ENCODE measurements at regions of chr3 and their contacts with region 1.

Region 1: DNA sequence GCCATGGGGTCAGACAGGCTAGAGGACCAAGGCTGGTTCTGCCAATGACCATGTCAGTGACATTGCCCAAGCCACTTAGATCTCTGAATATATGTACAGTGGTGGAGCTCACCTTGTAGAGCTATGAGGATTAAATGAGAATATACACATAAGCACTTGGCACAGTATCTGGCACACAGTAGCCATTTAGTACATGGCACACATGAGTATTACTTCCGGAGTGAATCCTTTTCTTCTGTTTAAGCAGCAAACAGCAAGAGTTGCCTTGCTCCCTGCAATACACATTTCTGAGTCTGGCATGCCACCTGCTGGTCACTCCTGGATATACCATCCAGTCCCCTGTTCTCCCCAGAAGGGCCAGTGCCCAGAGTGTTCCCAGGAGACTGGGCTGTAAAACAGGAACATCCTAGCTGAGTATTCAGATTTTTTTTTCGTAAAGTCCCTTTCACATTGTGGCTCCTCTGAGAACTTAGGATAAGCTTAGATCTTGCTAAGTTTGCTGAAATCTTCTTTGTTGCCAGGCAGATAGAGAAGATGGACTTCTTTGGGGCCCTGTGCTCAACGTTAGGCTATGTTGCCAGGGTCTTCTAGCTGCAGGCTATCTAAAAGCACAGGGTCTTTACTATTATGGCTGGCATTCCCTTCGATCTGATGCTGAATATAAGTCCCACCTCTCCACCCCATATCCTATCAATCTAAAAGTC is 203.4 kb downstream of the ADAMTS9 start:
- DNase-seq: peak; percentile 52
- H3K4me3 Mint-ChIP-seq: no peak overlapping the region
- H3K27ac Mint-ChIP-seq: no peak overlapping the region
- H3K4me1 Mint-ChIP-seq: no peaks in the 10 kb centered on the region
- H3K27me3 Mint-ChIP-seq: peaks cover 13% of the 10 kb centered on the region

Region 2: GRCh38 chr3:63863148-63864007 is 621.1 kb before region 1 on chr3 and contains the starts of genes ATXN7 and THOC7:
- intact Hi-C with region 1: loop called (anchors 5 kb)
- DNase-seq: peak; percentile 72
- H3K4me3 Mint-ChIP-seq: peak within 1 kb of the TSS; percentile 91
- H3K27ac Mint-ChIP-seq: peak within 1 kb of the TSS; percentile 94
- H3K4me1 Mint-ChIP-seq: peaks cover 67% of the 10 kb centered on the region
- H3K27me3 Mint-ChIP-seq: no peaks in the 10 kb centered on the region
- total RNA-seq, gene ATXN7: 40.7 and 48.2 TPM in 2 replicates
- total RNA-seq, gene THOC7: 100 and 106 TPM in 2 replicates

Region 3: DNA sequence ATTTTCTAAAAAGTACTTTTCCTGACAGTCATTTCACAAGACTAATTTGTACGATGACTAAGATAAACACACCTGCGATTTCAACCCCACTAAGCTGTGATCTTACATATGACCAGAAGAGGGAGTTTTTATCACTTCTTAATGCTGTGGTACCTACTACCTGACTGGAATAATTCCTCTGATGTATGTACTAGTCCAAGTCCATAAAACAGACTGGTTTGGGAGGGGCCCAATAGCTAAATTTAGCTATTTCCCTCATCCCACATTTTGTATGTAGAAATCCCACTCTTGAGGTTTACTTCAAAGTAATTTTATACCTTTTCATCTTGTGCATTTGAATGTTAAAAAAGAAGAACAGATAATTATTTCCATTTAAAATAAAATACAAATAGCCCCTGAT is 522.5 kb before region 1 on chr3:
- intact Hi-C with region 1: loop called (anchors 5 kb)
- DNase-seq: no peak
- H3K4me3 Mint-ChIP-seq: no peak overlapping the region
- H3K27ac Mint-ChIP-seq: no peak overlapping the region
- H3K4me1 Mint-ChIP-seq: peaks cover 51% of the 10 kb centered on the region
- H3K27me3 Mint-ChIP-seq: no peaks in the 10 kb centered on the region

Region 4: DNA sequence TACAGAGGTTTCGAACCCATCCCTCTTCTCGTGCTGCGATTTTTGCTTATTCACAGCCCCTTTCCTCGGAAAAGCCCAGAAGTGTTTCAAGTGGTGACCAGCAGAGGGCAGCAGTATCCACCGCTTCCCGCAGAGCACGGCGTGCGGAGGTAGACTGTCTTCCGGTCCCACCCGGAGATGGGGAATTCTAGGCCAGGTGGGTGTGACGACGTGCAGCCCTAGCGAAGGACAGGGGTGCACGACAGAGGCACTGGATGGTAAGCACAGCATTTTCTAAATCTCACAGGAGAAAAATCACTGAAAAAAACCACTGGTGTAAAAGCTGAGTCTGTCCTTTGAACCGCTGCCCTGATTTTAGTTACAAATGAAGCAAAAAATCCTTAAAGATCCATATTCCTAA is 453.7 kb before region 1 on chr3:
- intact Hi-C with region 1: loop called (anchors 1 kb)
- DNase-seq: peak; percentile 63
- H3K4me3 Mint-ChIP-seq: peak overlapping the region; percentile 67
- H3K27ac Mint-ChIP-seq: peak overlapping the region; percentile 49
- H3K4me1 Mint-ChIP-seq: peaks cover 7% of the 10 kb centered on the region
- H3K27me3 Mint-ChIP-seq: peaks cover 33% of the 10 kb centered on the region

Region 5: GRCh38 chr3:64049136-64049535 is 435.3 kb before region 1 on chr3:
- intact Hi-C with region 1: loop called (anchors 5 kb)
- DNase-seq: no peak
- H3K4me3 Mint-ChIP-seq: no peak overlapping the region
- H3K27ac Mint-ChIP-seq: no peak overlapping the region
- H3K4me1 Mint-ChIP-seq: peaks cover 11% of the 10 kb centered on the region
- H3K27me3 Mint-ChIP-seq: peaks cover 3% of the 10 kb centered on the region

Region 6: DNA sequence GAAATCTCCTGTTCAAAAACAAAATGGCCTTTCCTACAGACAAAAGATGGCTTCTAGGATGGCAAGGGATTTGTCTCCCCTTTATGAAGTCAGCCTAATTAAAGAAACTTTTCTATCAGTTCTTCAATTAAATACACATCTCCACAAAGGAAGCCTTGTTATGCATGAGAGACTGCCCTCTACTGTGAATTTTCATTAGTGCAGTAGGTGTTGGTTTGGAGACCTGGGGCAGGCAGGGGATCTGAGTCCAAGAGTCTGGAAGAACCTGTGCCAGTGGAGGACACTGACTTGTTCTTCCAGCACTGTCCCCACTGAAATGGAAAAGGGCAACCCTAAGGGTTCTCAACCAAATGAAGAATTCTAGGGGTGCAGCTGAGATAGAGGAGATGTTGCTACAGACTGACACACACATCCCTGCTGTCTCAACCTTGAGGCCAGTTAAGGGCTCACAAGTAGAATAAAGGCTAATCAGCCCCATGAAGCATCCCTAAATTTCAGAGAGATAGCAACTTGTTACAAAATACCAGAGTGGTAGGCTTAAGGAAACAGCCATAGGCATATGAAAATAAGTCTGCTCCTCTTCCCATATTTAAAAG is 85.1 kb before region 1 on chr3:
- intact Hi-C with region 1: loop called (anchors 1 kb)
- DNase-seq: no peak
- H3K4me3 Mint-ChIP-seq: no peak overlapping the region
- H3K27ac Mint-ChIP-seq: no peak overlapping the region
- H3K4me1 Mint-ChIP-seq: no peaks in the 10 kb centered on the region
- H3K27me3 Mint-ChIP-seq: no peaks in the 10 kb centered on the region

Region 7: GRCh38 chr3:64945171-64945729 is 460.8 kb after region 1 on chr3:
- intact Hi-C with region 1: no loop called
- DNase-seq: no peak
- H3K4me3 Mint-ChIP-seq: no peak overlapping the region
- H3K27ac Mint-ChIP-seq: no peak overlapping the region
- H3K4me1 Mint-ChIP-seq: no peaks in the 10 kb centered on the region
- H3K27me3 Mint-ChIP-seq: peaks cover 1% of the 10 kb centered on the region